GM10248 (cell line): ENCODE measurements at regions of chr15 and their contacts with region 1.

Region 1: GRCh38 chr15:85858586-85859375 is 64.1 kb upstream of the KLHL25 start:
- DNase-seq: peak; percentile 81
- CTCF ChIP-seq: peak; percentile 76

Region 2: DNA sequence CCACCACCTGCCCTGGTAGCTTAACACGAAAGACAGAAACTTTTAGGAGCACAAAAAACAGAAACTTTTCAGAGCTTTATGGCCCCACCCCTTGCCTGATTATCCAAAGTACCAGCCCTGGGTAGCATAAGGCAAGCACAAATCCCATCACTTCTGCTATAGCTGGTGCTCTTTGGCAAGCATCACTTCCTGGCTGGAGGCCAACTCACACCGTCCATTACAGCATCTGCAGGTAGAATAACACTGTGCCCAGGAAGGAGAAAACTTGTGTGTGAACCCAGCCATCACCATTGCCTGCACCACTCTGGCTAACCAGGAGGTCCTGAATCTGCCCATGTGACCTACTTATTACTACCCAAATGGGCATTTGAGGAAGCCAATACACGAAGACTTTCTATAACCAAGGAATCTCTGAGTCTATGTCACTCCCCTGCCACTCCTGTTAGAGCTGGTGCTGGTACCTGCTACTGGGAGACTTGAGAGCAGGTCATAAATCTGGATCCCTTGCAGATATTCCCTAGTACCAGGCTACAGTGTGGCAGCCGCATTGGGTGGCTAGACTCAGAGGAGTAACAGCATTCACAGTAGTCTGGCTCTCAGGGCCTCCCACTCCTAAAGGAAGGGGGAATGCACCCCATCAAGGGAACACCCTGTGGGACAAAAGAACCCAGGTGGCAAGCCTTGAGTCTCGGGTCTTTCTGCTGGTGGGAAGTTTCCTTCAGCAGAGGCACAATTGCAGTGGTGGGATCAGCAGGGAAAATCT is 551.7 kb before region 1 on chr15:
- CTCF ChIA-PET with region 1: no interaction called
- POLR2A ChIA-PET with region 1: no interaction called
- DNase-seq: no peak
- CTCF ChIP-seq: no peak

Region 3: GRCh38 chr15:85630311-85630710 is 228.5 kb before region 1 on chr15:
- CTCF ChIA-PET with region 1: no interaction called
- POLR2A ChIA-PET with region 1: no interaction called
- DNase-seq: no peak
- CTCF ChIP-seq: no peak

Region 4: DNA sequence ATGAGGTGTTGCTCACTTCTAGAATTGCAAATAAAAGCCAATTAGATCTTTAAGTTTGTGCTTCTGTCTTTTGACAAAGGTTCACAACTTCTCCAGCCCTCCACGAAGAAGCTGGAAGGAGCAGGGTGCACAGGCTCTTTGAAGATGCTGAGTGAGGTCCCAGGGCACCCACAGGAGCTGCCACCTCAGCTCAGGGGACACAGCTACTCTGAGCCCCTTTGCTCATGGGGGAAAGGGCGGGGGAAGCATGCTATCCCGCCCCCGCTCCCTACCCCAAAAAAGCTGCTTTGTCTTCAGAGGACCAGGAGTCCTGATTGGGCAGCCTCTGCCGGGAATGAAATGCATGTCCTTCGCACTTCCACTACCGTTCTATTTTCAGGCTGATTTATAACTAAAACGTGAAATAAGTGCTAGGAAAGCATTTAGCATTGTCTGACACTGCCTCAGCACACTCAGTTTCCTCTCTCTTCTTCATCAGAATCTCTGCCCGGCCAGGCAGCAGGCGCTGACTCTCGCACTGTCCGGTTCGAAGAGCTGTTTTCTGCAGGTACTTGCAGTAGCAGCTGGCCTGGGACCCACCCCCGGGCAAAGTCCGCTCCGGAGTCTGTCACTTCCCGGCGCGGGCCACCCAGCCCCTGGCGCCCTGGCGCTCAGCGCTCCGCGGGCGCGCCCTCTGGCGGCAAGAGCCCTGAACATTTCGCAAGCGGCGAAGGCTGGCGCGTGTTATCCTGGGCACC is 18.5 kb before region 1 on chr15:
- CTCF ChIA-PET with region 1: interaction called, 10 read pairs
- POLR2A ChIA-PET with region 1: no interaction called
- DNase-seq: peak; percentile 88
- CTCF ChIP-seq: peak; percentile 94

Region 5: GRCh38 chr15:85847031-85847430 is 11.8 kb before region 1 on chr15:
- CTCF ChIA-PET with region 1: interaction called, 10 read pairs
- POLR2A ChIA-PET with region 1: no interaction called
- DNase-seq: no peak
- CTCF ChIP-seq: no peak

Region 6: GRCh38 chr15:85871545-85871944 is 12.8 kb after region 1 on chr15:
- CTCF ChIA-PET with region 1: interaction called, 11 read pairs
- POLR2A ChIA-PET with region 1: no interaction called
- DNase-seq: no peak
- CTCF ChIP-seq: no peak

Region 7: GRCh38 chr15:86743283-86743903 is 884.6 kb after region 1 on chr15:
- CTCF ChIA-PET with region 1: interaction called, 10 read pairs
- POLR2A ChIA-PET with region 1: no interaction called
- DNase-seq: no peak
- CTCF ChIP-seq: peak; percentile 30